ENCODE measurements at regions of chr13 and their contacts with region 1.

Region 1: GRCh38 chr13:26253787-26254582 is at the start of gene CDK8:
- DNase-seq: peak; percentile 80
- H3K4me3 Mint-ChIP-seq: peak within 1 kb of the TSS; percentile 91
- H3K27ac Mint-ChIP-seq: peak within 1 kb of the TSS; percentile 88
- H3K4me1 Mint-ChIP-seq: peaks cover 25% of the 10 kb centered on the region
- H3K27me3 Mint-ChIP-seq: peaks cover 2% of the 10 kb centered on the region
- total RNA-seq, gene CDK8: 18.4 and 18.9 TPM in 2 replicates

Region 2: DNA sequence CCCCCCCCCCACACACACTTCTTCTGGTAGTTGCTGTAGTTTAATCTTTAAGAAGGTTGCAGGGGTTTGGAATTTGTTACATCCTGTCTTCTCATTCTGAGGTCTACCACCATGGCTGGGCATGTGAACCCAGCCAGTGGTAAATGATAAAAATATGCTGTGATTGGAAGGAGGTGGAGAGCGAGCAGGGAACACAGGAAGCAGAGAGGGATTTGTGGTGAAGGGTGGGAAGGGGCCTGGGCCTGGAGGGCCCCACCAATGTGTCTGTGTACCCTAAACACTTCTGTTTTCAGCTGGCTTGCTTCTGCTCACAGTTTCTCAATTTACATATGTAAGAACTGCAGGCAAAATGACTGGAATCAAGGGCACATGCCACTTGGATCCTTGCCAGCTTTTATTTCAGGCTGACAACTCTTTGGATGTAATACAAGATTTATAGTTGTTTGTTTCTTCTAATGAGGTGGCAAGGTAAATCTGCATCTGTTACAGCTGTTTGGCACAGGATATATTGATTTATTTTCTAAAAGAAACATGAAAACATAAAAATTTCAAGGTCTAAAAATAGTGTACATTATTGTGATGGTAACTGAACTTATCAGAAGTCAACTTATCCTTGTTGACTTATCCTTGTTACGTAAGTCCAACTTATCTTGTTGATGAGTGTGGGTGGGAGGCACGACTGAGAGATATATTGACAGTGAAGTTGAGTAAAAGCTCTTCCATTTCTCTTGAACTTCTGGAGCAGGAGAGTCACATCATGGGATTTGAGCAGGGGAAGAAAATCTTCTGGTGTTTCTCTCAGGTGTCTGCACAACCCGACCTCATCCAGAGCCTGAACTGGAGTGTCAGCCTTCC is 515.4 kb before region 1 on chr13:
- intact Hi-C with region 1: no loop called
- DNase-seq: no peak
- H3K4me3 Mint-ChIP-seq: peak overlapping the region; percentile 45
- H3K27ac Mint-ChIP-seq: peak overlapping the region; percentile 74
- H3K4me1 Mint-ChIP-seq: peaks cover 32% of the 10 kb centered on the region
- H3K27me3 Mint-ChIP-seq: no peaks in the 10 kb centered on the region

Region 3: GRCh38 chr13:26390203-26390602 is 136.2 kb after region 1 on chr13:
- intact Hi-C with region 1: loop called (anchors 10 kb)
- DNase-seq: no peak
- H3K4me3 Mint-ChIP-seq: no peak overlapping the region
- H3K27ac Mint-ChIP-seq: no peak overlapping the region
- H3K4me1 Mint-ChIP-seq: peaks cover 6% of the 10 kb centered on the region
- H3K27me3 Mint-ChIP-seq: no peaks in the 10 kb centered on the region

Region 4: DNA sequence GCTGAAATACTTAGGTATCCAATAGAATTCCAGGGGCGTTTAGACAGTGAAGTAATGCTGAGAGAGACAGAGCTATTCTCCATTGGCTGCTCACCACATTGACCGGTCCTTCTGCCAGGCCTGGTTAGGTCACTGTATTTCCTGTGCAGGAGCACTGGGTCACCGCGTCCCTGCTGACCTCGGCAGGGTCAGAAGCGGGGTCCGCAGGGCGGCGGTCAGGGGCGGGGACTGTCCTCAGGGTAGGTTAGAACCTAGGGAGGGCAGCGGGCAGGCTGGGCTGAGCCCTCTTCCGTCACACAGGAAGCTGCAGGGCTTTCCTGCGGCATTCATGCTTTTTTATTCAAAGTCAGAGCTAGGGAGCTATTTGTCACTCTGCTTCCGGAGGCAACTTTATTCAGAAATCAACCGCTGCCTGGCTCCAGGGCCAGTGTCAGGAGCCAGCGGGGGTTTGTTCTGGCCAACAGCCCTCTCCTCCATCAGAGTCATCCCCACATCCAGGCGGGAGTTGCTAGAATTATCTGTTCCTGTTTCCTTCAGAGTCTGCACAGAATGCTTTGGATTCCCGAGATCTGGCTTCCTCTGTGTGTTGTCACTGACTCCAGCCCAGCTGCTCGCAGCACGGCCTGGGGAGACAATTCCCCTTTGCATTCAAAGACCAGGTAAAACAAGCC is 222.3 kb after region 1 on chr13:
- intact Hi-C with region 1: loop called (anchors 5 kb)
- DNase-seq: no peak
- H3K4me3 Mint-ChIP-seq: peak overlapping the region; percentile 6
- H3K27ac Mint-ChIP-seq: no peak overlapping the region
- H3K4me1 Mint-ChIP-seq: peaks cover 10% of the 10 kb centered on the region
- H3K27me3 Mint-ChIP-seq: no peaks in the 10 kb centered on the region

Measured in activated T-helper 1 cell treated with anti-CD3 and anti-CD28 coated beads, Interleukin-12 subunit alpha, Interleukin-12 subunit beta, Interleukin-2, Interleukin-4 antibody, amounts not matched to agents 30 ng/mL and 10 ng/mL and 1 ng/mL, durations not matched to agents 14 hours and 24 hours and 36 hours (primary cell).